H1 (cell line): ENCODE measurements at regions of chr1 and their contacts with region 1.

Region 1: GRCh38 chr1:21255278-21255942 is 34.9 kb downstream of the ECE1 start:
- DNase-seq: peak; percentile 62 to 95
- H3K4me3 ChIP-seq: no peak overlapping the region
- H3K27ac ChIP-seq: no peak overlapping the region
- H3K4me1 ChIP-seq: no peaks in the 10 kb centered on the region
- H3K27me3 ChIP-seq: no peaks in the 10 kb centered on the region
- CTCF ChIP-seq: peak; percentile 82 to 98 (median 97)
- EP300 ChIP-seq: no peak
- POLR2A ChIP-seq: no peak
- RAD21 ChIP-seq: peak; percentile 95 to 96

Region 2: DNA sequence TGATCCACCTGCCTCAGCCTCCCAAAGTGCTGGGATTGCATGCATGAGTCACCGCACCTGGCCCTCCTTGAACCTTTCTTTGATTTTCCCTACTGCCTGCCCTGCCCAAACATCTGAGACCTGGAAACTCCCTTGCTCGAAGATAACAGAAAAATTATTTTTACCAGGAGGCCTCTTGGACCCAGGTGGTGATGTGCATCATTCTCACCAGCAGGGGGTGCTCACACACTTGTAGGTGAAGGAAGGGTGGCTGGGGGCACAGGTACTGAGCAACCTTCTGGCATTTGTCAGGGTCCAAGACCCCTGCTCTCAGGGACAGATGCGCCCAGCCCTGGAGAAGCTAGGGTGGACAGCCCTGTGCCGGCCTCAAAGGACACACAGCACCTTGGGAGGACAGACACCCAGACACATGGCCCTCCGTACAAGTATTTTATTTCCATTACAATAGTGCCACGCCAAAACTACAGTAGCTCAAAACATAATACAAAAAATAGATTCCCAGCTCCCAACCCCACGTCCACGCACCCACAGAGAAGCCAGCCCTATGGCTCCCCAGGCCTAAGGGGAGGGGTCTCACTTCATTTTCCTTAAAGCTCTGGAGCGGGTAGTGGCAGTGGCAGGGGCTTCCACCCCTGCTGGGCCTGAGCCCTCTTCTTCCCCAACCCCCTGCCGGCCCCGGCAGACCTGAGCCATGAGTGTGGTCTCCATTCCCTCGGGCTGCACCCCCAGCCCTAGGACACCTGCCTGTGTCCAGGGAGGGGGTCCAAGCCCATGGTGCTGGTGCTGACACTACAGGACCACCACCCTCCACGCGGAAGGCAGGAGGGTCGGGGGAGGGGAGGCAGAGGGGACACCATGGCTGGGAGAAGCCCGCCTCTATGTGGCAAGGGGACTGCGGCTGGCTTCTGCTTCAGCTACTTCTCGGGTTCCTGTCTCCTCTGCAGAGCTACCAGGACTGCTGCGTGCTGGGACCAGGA is 38.3 kb before region 1 on chr1:
- CTCF ChIA-PET with region 1: interaction called, 38 read pairs
- POLR2A ChIA-PET with region 1: no interaction called
- DNase-seq: peak in 1 of 2 experiments; percentile 88
- H3K4me3 ChIP-seq: no peak overlapping the region
- H3K27ac ChIP-seq: no peak overlapping the region
- H3K4me1 ChIP-seq: peaks cover 0 to 5% (median 5%) of the 10 kb centered on the region in 4 experiments; a peak in 5 of 7 replicates
- H3K27me3 ChIP-seq: no peaks in the 10 kb centered on the region
- CTCF ChIP-seq: peak; percentile 60 to 86 (median 80)
- EP300 ChIP-seq: no peak
- POLR2A ChIP-seq: no peak
- RAD21 ChIP-seq: peak; percentile 43 to 67; a peak in 3 of 4 replicates

Region 3: DNA sequence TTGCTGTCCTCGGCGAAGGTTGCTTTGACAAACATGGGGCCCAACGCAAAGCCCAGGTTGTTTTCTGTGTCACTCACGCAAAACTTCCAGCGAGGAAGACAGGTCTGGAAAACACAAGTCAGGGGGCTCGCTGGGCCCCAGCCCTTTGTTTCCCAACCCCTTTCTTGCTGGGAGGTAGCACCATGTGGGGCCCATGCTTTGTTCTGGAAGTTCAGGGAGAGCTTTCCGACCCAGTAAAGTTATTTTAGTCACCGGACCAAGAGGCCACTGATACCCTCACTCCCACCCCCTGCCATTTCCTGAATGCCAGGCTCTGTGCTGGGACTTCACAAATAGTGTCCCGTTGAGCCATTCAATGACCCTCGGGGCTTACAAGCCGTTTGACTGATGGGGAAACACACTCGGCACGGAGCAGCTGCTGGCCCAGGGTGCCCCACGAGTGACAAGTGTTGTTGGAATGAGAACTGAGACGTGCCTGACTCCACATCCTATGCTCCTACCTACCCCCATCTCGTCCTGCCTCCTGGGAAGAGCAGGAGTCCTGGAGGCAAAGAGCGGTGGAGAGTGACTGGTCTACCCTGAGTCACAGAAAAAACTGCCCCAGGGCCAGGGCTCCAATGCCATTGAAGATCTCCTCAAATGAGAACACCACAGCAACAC is 17.1 kb before region 1 on chr1:
- CTCF ChIA-PET with region 1: interaction called, 106 read pairs
- POLR2A ChIA-PET with region 1: no interaction called
- DNase-seq: no peak
- H3K4me3 ChIP-seq: no peak overlapping the region
- H3K27ac ChIP-seq: no peak overlapping the region
- H3K4me1 ChIP-seq: peaks cover 0 to 8% (median 5%) of the 10 kb centered on the region in 4 experiments; a peak in 4 of 7 replicates
- H3K27me3 ChIP-seq: no peaks in the 10 kb centered on the region
- CTCF ChIP-seq: no peak
- EP300 ChIP-seq: no peak
- POLR2A ChIP-seq: no peak
- RAD21 ChIP-seq: no peak

Region 4: DNA sequence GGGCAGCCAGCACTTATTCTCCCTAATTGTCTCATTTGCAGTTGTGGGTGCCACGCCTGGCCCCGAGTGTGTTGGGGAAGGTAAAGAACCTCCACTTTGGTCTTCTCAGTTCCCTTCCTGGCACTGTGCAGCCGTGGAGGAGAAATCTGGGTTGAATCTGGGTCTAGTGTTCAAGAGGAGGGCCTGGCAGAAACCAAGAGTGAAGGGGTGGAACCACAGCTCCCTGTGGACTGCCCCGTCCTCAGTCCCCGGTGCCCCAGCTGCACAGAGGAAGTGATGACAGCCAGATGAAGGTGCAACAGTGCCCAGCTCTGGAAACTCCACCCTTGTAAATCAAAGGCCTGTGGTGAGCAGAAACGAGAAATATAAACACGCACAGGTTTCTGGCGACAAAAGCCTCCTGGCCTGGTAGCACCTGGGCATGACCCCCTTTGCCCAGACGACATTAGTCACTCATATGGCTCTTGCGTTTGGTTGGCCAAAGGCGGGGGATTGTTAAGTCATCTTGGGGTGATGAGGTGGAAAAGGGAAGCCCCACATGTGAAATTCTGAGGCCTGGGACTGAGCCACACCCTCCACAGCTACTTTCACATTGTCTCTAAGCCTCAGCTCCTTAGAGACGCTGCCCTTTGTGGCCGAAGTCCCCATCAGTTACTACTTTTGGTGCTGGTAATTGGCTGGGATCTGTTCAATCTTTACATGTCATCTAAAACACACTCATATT is 39.0 kb after region 1 on chr1:
- CTCF ChIA-PET with region 1: interaction called, 10 read pairs
- POLR2A ChIA-PET with region 1: interaction called, 3 read pairs
- DNase-seq: no peak
- H3K4me3 ChIP-seq: no peak overlapping the region
- H3K27ac ChIP-seq: no peak overlapping the region
- H3K4me1 ChIP-seq: peaks cover 0 to 18% (median 14%) of the 10 kb centered on the region in 4 experiments; a peak in 6 of 7 replicates
- H3K27me3 ChIP-seq: no peaks in the 10 kb centered on the region
- CTCF ChIP-seq: no peak
- EP300 ChIP-seq: no peak
- POLR2A ChIP-seq: no peak
- RAD21 ChIP-seq: no peak

Region 5: DNA sequence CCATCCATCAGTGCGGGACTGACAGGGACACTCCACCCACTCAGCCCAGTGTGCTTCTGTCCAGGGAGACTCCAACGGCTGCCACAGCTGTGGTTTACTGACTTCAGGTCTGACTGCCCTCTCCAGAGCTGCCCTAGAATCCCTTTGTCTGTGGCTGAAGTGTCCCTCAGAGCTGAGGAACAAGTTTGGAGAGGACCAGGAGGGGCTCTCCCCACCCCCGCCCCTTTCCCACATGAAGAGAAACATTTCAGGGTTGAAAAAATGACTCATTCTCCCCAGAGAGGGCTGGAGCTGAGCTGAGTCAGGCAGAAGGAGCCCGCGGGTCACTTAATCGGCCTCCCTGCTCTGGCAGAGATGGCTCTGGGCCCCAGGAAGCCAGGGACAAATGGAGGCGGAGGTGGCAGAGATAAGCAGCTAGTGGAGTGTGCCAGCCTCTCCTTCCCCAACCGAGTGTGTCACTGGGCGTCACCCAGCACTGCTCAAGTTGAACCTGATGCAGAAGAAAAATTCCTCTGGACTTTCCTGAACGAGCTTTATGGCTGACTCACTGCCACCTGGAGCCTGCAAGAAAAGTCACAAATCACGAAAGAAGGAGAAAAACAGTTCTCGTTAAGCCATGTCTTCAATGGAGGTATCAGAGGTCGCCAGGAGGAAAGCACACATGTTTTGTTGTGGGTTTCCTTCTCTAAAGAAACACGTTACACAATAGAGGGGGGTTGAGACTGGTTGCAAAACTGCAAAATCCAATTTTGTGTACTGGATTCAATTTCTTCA is 69.1 kb after region 1 on chr1:
- CTCF ChIA-PET with region 1: interaction called, 10 read pairs
- POLR2A ChIA-PET with region 1: no interaction called
- DNase-seq: no peak
- H3K4me3 ChIP-seq: no peak overlapping the region
- H3K27ac ChIP-seq: peak overlapping the region; percentile 14; the same call in 1 of the 2 replicates
- H3K4me1 ChIP-seq: peaks cover 24 to 72% (median 55%) of the 10 kb centered on the region in 4 experiments
- H3K27me3 ChIP-seq: no peaks in the 10 kb centered on the region
- CTCF ChIP-seq: no peak
- EP300 ChIP-seq: no peak
- POLR2A ChIP-seq: no peak
- RAD21 ChIP-seq: no peak

Region 6: GRCh38 chr1:21344750-21345443 is 89.5 kb after region 1 on chr1:
- CTCF ChIA-PET with region 1: interaction called, 108 read pairs
- POLR2A ChIA-PET with region 1: no interaction called
- DNase-seq: peak in 1 of 2 experiments; percentile 65
- H3K4me3 ChIP-seq: peak overlapping the region; percentile 52 to 78 (median 70)
- H3K27ac ChIP-seq: no peak overlapping the region
- H3K4me1 ChIP-seq: peaks cover 3 to 12% (median 5%) of the 10 kb centered on the region in 4 experiments
- H3K27me3 ChIP-seq: peaks cover 0 to 20% (median 15%) of the 10 kb centered on the region in 4 experiments; a peak in 6 of 7 replicates
- CTCF ChIP-seq: no peak
- EP300 ChIP-seq: no peak
- POLR2A ChIP-seq: no peak
- RAD21 ChIP-seq: no peak

Region 7: GRCh38 chr1:21362096-21362495 is 106.7 kb after region 1 on chr1:
- CTCF ChIA-PET with region 1: interaction called, 374 read pairs
- POLR2A ChIA-PET with region 1: no interaction called
- DNase-seq: no peak
- H3K4me3 ChIP-seq: no peak overlapping the region
- H3K27ac ChIP-seq: no peak overlapping the region
- H3K4me1 ChIP-seq: no peaks in the 10 kb centered on the region
- H3K27me3 ChIP-seq: no peaks in the 10 kb centered on the region
- CTCF ChIP-seq: no peak
- EP300 ChIP-seq: no peak
- POLR2A ChIP-seq: no peak
- RAD21 ChIP-seq: no peak